BJ (cell line): ENCODE measurements at regions of chr1 and their contacts with region 1.

Region 1: DNA sequence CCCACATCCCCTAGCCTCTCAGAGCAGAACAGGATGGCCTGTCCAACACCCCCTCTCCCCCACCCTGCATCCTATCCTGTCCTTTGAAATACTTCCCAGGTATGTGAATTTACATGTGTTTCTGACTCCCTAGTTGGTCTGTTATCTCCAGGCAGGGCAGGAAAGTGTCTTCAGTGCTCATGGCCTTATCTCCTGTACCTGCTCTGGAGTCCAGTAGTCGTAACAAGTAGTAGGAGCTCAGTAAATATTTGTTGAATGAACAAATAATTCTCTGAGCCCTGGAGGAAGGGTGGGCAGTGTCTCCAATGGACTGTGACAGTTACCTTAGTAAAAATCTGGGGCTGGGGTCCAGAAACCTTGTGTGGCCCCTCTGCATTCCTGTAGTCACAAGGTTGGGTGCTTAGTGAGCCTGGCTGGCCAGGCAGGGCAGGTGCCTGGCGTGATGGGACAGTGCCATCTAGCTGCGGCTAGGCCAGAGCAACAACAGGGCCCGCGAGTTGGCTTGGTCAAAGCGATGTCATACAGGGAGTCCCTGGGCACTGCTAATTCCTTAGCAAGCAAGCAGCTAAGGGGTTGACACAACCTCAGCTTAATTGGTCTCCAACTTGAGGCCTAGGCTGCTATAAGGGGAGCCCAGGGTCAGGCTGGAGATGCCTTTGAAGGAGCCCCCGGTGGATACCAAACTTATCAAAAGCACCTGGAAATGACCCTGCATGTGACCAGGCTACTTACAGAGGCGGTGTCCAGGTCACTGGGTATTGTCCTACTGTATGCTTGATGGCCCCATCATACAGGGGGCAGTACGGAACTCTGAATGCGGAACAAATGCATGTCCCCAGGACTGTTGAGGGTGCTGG is 89.0 kb upstream of the PPM1J start:
- DNase-seq: no peak
- H3K4me3 ChIP-seq: no peak overlapping the region
- H3K27me3 ChIP-seq: 0 out of 2 replicates have a peak, but pooled peaks cover 4% of the 10 kb centered on the region
- CTCF ChIP-seq: peak; percentile 92

Region 2: DNA sequence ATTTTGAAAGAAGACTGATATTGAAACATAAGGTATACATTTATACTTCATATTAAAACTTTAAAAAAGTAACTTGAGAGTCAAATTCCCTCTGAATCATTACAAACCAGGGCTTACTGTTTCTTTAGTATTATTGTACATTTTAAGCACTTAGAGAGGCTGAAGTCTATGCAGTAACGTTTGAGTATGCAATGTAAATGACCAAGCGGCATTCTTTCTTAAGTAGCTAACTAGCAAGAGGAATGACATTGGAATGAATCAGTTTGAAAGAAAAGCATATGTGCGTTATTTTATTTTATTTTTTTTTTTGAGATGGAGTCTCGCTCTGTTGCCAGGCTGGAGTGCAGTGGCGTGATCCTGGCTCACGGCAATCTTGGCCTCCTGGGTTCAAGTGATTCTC is 271.1 kb before region 1 on chr1:
- CTCF ChIA-PET with region 1: no interaction called
- POLR2A ChIA-PET with region 1: no interaction called
- DNase-seq: no peak
- H3K4me3 ChIP-seq: no peak overlapping the region
- H3K27me3 ChIP-seq: no peaks in the 10 kb centered on the region
- CTCF ChIP-seq: no peak

Region 3: GRCh38 chr1:112722601-112723510 is 81.3 kb before region 1 on chr1:
- CTCF ChIA-PET with region 1: interaction called, 486 read pairs
- POLR2A ChIA-PET with region 1: no interaction called
- DNase-seq: no peak
- H3K4me3 ChIP-seq: no peak overlapping the region
- H3K27me3 ChIP-seq: no peaks in the 10 kb centered on the region; the same call in 1 of the 2 replicates
- CTCF ChIP-seq: no peak

Region 4: GRCh38 chr1:112744009-112744578 is 60.0 kb before region 1 on chr1:
- CTCF ChIA-PET with region 1: interaction called, 22 read pairs
- POLR2A ChIA-PET with region 1: no interaction called
- DNase-seq: no peak
- H3K4me3 ChIP-seq: peak overlapping the region; percentile 22
- H3K27me3 ChIP-seq: peaks cover 7% of the 10 kb centered on the region
- CTCF ChIP-seq: peak; percentile 83

Region 5: DNA sequence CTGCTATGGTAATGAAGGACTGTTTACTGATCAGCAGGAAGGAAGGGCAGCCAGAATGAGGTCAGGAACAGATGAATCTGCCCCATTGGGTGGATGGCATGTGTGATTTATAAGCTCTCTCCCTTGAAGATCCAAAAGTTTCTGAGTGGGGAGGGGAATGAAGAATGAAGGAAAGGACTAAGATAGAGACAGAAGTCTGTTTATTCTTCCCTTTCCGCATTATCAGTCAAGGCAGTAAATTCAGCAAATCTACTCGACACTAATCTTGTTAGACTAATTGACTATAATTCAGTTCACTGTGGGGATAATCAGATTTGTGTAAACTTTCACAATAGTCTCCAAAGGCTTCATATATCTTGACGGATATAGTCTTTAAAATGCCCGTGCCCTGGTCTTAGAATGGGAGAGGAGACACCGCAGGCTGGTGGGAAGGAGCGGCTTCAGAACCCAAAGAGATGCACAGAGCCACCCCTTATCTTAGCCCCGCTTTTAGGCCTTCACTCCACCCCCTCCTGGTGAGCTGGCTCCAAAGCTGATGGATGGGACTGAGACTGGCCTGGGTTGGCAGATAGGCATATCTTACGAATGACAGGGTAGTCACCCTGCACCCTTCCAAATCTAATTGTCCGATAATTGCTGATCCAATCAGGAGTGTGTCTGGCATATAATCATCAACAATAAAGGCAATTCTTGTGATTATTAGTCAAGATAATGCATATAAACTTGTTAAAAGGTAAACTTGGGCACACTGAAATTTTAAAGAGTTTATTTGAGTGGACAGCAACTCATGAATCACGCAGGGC is 13.0 kb before region 1 on chr1:
- CTCF ChIA-PET with region 1: interaction called, 11 read pairs
- POLR2A ChIA-PET with region 1: no interaction called
- DNase-seq: no peak
- H3K4me3 ChIP-seq: no peak overlapping the region
- H3K27me3 ChIP-seq: no peaks in the 10 kb centered on the region
- CTCF ChIP-seq: no peak

Region 6: GRCh38 chr1:113042285-113043143 is 238.4 kb after region 1 on chr1:
- CTCF ChIA-PET with region 1: interaction called, 33 read pairs
- POLR2A ChIA-PET with region 1: no interaction called
- DNase-seq: peak; percentile 57
- H3K4me3 ChIP-seq: no peak overlapping the region
- H3K27me3 ChIP-seq: no peaks in the 10 kb centered on the region
- CTCF ChIP-seq: peak; percentile 67